ENCODE measurements at regions of chr2 and their contacts with region 1.

Region 1: DNA sequence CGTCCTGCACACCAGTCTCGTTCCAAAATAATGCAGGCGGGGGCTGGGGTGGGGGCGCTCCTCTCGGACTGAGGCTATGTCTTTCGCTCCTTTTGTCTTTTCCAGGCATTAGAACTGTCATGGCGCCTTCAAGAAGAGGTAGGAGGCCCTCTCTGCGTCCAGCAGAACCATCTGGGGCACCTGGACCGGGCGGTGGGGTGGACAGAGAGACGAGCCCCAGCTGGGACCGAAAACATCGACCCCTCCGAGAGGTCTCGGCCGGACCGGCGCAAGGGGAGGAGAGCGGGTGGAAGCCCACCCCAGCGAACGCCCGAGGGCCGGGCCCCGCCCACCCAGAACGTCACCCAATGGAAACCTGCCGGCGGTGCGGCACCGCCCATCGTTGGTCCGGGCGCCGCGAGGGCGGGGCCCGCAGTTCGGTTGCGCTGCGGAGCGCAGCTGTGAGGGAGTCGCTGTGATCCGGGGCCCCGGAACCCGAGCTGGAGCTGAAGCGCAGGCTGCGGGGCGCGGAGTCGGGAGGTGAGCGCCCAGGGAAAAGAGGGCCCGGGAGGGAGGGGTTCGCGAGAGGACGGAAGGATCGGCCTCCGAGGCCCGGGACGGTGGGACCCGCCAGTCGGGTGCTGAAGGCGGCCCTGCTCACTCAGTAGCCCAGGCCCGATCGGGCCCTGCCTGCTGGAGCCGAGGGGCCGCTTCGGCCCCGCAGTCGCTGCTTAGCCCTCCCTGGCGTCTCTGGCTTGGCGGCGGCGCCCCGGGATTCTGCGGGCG is at the start of gene NRBP1:
- DNase-seq: peak; percentile 80 to 95 (median 91)
- ATAC-seq: peak; percentile 91
- H3K4me3 ChIP-seq: peak within 1 kb of the TSS; percentile 81 to 92
- H3K4me3 Mint-ChIP-seq: peak within 1 kb of the TSS; percentile 97
- H3K27ac ChIP-seq: peak within 1 kb of the TSS; percentile 79 to 90
- H3K27ac Mint-ChIP-seq: peak within 1 kb of the TSS; percentile 97
- H3K4me1 ChIP-seq: peaks cover 29% of the 10 kb centered on the region
- H3K4me1 Mint-ChIP-seq: peaks cover 38% of the 10 kb centered on the region
- H3K27me3 ChIP-seq: no peaks in the 10 kb centered on the region
- H3K27me3 Mint-ChIP-seq: no peaks in the 10 kb centered on the region
- CTCF ChIP-seq: no peak
- total RNA-seq, gene NRBP1: 192 to 196 TPM

Region 2: GRCh38 chr2:27211829-27212627 is 216.4 kb before region 1 on chr2 and contains the starts of genes ATRAID and SLC5A6:
- CTCF ChIA-PET with region 1: no interaction called
- POLR2A ChIA-PET with region 1: no interaction called
- intact Hi-C with region 1: loop called (anchors 5 kb)
- DNase-seq: peak; percentile 78 to 94 (median 87)
- ATAC-seq: peak; percentile 84
- H3K4me3 ChIP-seq: peak within 1 kb of the TSS; percentile 67 to 99
- H3K4me3 Mint-ChIP-seq: peak within 1 kb of the TSS; percentile 100
- H3K27ac ChIP-seq: peak within 1 kb of the TSS; percentile 97 to 100
- H3K27ac Mint-ChIP-seq: peak within 1 kb of the TSS; percentile 100
- H3K4me1 ChIP-seq: peaks cover 26% of the 10 kb centered on the region
- H3K4me1 Mint-ChIP-seq: peaks cover 44% of the 10 kb centered on the region
- H3K27me3 ChIP-seq: no peaks in the 10 kb centered on the region
- H3K27me3 Mint-ChIP-seq: no peaks in the 10 kb centered on the region
- CTCF ChIP-seq: no peak
- total RNA-seq, gene ATRAID: 70.0 to 71.7 TPM
- total RNA-seq, gene SLC5A6: 410 to 431 TPM

Region 3: DNA sequence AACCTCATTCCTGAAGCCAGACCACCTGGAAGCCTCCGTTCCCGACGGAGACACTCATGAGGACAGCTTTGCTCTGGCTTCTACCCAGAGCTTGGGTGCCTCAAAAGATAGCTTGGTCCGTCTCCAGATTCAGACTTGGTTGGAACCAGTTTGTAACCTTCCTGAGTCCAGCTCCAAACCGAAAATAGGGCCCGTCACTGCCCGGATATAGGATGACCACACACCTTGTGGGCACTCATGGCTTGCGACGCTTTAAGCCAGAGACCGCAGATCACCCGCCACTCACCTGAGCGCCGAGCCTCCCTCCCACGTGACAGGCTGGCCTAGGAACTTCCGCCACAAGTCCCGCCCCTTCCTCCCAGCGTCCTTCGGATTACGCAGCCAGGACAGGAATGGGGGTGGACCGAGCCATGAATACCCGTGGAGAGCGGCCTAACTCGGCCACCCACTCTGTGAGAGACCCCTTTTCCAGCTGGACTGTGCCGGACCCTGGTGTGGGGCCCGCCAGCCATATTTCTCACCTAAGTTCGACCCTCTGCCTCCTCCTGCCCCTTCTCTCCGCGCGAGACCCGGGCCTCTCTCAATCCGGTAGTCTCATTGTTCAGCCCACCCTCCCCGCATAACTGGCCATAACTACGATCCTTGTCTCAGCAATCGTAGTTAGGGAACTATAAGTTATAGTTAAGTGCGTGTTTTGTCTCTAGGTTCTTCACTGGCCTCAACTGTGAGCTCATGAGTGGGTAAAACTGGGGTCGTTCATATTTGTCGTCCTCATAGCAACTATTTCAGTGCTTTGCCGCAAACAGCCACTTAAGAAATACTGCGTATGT is 105.4 kb before region 1 on chr2 and contains the start of gene MPV17:
- CTCF ChIA-PET with region 1: no interaction called
- POLR2A ChIA-PET with region 1: no interaction called
- intact Hi-C with region 1: loop called (anchors 1 to 2 kb)
- DNase-seq: peak; percentile 65 to 93 (median 87)
- ATAC-seq: peak; percentile 96
- H3K4me3 ChIP-seq: peak within 1 kb of the TSS; percentile 80 to 81
- H3K4me3 Mint-ChIP-seq: peak within 1 kb of the TSS; percentile 99
- H3K27ac ChIP-seq: peak within 1 kb of the TSS; percentile 89 to 94
- H3K27ac Mint-ChIP-seq: peak within 1 kb of the TSS; percentile 99
- H3K4me1 ChIP-seq: peaks cover 9% of the 10 kb centered on the region
- H3K4me1 Mint-ChIP-seq: peaks cover 25% of the 10 kb centered on the region
- H3K27me3 ChIP-seq: no peaks in the 10 kb centered on the region
- H3K27me3 Mint-ChIP-seq: no peaks in the 10 kb centered on the region
- CTCF ChIP-seq: no peak
- total RNA-seq, gene MPV17: 23.6 to 26.0 TPM

Region 4: DNA sequence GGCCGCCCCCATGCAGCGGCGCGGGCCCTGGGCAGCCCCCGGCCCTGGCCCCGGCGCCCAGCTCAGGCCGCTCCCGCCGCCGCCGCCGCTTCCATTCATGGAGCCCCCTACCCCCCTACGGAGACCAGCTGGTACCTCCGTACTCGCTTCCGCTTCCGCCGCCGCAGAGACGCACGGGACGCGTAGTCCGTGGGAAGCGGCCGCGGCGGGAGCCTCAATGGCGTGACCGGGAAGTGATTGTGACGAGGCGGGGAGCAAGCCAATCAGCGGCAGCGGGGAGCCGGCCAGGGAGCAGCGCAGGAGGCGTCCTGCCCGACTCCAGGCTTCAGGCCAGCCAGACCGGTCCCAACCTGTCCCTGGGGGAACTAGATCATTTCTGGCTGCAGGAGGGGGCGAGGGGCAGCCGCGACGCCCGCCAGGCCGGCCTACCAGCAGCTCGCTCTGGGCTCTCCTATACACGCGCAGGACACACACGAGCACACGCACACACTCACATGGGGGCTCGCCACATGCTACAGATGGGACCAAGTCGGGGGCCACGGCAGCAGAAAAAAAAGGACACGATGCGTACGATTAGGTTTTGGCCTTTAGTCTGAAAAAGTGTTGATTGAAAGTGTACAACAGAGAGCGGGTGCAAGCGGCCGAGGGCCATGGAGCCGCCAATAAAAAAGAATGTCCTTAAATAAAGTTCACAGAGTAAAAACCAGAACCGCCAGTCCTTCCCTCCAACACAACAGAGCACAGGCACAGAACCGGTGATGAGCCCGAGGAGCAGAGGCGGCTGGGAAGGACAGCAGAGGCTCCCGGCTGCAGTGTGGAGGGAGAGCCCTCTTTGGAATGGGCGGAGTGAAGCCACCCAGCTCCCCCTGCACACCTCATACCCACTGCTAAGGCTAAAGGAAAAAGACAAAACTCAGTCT is 47.5 kb before region 1 on chr2 and contains the start of gene ZNF513:
- CTCF ChIA-PET with region 1: no interaction called
- POLR2A ChIA-PET with region 1: interaction called, 8 read pairs
- intact Hi-C with region 1: loop called (anchors 2 kb)
- DNase-seq: peak; percentile 70 to 94 (median 89)
- ATAC-seq: peak; percentile 89
- H3K4me3 ChIP-seq: peak within 1 kb of the TSS; percentile 65 to 72
- H3K4me3 Mint-ChIP-seq: peak within 1 kb of the TSS; percentile 87
- H3K27ac ChIP-seq: peak within 1 kb of the TSS; percentile 66 to 94
- H3K27ac Mint-ChIP-seq: peak within 1 kb of the TSS; percentile 94
- H3K4me1 ChIP-seq: peaks cover 17% of the 10 kb centered on the region
- H3K4me1 Mint-ChIP-seq: peaks cover 22% of the 10 kb centered on the region
- H3K27me3 ChIP-seq: no peaks in the 10 kb centered on the region
- H3K27me3 Mint-ChIP-seq: no peaks in the 10 kb centered on the region
- CTCF ChIP-seq: no peak
- total RNA-seq, gene ZNF513: 19.0 to 21.6 TPM

Region 5: GRCh38 chr2:27461118-27461517 is 32.7 kb after region 1 on chr2:
- CTCF ChIA-PET with region 1: no interaction called
- POLR2A ChIA-PET with region 1: no interaction called
- intact Hi-C with region 1: no loop called
- DNase-seq: no peak
- ATAC-seq: no peak
- H3K4me3 ChIP-seq: no peak overlapping the region
- H3K4me3 Mint-ChIP-seq: no peak overlapping the region
- H3K27ac ChIP-seq: no peak overlapping the region
- H3K27ac Mint-ChIP-seq: no peak overlapping the region
- H3K4me1 ChIP-seq: no peaks in the 10 kb centered on the region
- H3K4me1 Mint-ChIP-seq: no peaks in the 10 kb centered on the region
- H3K27me3 ChIP-seq: no peaks in the 10 kb centered on the region
- H3K27me3 Mint-ChIP-seq: no peaks in the 10 kb centered on the region
- CTCF ChIP-seq: no peak

Region 6: GRCh38 chr2:27489498-27490397 is 61.4 kb after region 1 on chr2 and contains the start of gene IFT172:
- CTCF ChIA-PET with region 1: no interaction called
- POLR2A ChIA-PET with region 1: no interaction called
- intact Hi-C with region 1: loop called (anchors 1 to 2 kb)
- DNase-seq: peak; percentile 98 to 100 (median 99)
- ATAC-seq: peak; percentile 91
- H3K4me3 ChIP-seq: peak within 1 kb of the TSS; percentile 53 to 57
- H3K4me3 Mint-ChIP-seq: peak within 1 kb of the TSS; percentile 82
- H3K27ac ChIP-seq: peak within 1 kb of the TSS; percentile 85 to 90
- H3K27ac Mint-ChIP-seq: peak within 1 kb of the TSS; percentile 94
- H3K4me1 ChIP-seq: peaks cover 20% of the 10 kb centered on the region
- H3K4me1 Mint-ChIP-seq: peaks cover 21% of the 10 kb centered on the region
- H3K27me3 ChIP-seq: peaks cover 7 to 10% of the 10 kb centered on the region in 2 experiments
- H3K27me3 Mint-ChIP-seq: peaks cover 13% of the 10 kb centered on the region
- CTCF ChIP-seq: no peak
- total RNA-seq, gene IFT172: 15.0 to 17.2 TPM

Region 7: DNA sequence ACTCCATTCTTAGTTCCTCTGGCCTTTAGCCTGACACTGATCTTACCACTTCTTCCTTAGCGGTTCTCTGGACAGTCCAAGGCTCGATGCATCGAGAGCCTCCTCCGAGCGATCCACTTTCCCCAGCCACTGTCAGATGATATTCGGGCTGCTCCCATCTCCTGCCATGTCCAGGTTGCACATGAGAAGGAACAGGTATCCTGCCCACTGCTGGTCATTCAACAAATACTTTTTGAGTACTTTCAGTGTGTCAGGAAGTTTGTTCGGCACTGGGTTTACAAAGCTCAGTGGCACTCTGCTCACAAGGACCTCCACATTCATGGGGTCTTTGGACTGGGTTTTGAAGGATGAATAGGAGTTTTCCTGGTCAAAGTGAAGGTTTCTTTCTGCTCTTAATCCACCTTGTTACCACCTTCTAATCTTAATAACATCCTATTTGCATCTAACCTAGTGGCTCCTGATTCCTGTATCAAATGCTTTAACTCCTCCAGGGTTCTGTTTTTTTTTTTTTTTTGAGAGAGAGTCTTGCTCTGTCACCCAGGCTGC is 94.1 kb after region 1 on chr2:
- CTCF ChIA-PET with region 1: no interaction called
- POLR2A ChIA-PET with region 1: no interaction called
- intact Hi-C with region 1: no loop called
- DNase-seq: no peak
- ATAC-seq: no peak
- H3K4me3 ChIP-seq: no peak overlapping the region
- H3K4me3 Mint-ChIP-seq: no peak overlapping the region
- H3K27ac ChIP-seq: no peak overlapping the region
- H3K27ac Mint-ChIP-seq: no peak overlapping the region
- H3K4me1 ChIP-seq: no peaks in the 10 kb centered on the region
- H3K4me1 Mint-ChIP-seq: no peaks in the 10 kb centered on the region
- H3K27me3 ChIP-seq: peaks cover 2 to 3% of the 10 kb centered on the region in 2 experiments
- H3K27me3 Mint-ChIP-seq: peaks cover 43% of the 10 kb centered on the region
- CTCF ChIP-seq: no peak

Region 8: GRCh38 chr2:28009732-28010131 is 581.3 kb after region 1 on chr2:
- CTCF ChIA-PET with region 1: no interaction called
- POLR2A ChIA-PET with region 1: no interaction called
- intact Hi-C with region 1: no loop called
- DNase-seq: no peak
- ATAC-seq: no peak
- H3K4me3 ChIP-seq: no peak overlapping the region
- H3K4me3 Mint-ChIP-seq: no peak overlapping the region
- H3K27ac ChIP-seq: no peak overlapping the region
- H3K27ac Mint-ChIP-seq: no peak overlapping the region
- H3K4me1 ChIP-seq: no peaks in the 10 kb centered on the region
- H3K4me1 Mint-ChIP-seq: no peaks in the 10 kb centered on the region
- H3K27me3 ChIP-seq: no peaks in the 10 kb centered on the region
- H3K27me3 Mint-ChIP-seq: no peaks in the 10 kb centered on the region
- CTCF ChIP-seq: no peak

Measured in CD8-positive, alpha-beta T cell (primary cell).